IMR-90 (cell line): ENCODE measurements at regions of chr7 and their contacts with region 1.

Region 1: DNA sequence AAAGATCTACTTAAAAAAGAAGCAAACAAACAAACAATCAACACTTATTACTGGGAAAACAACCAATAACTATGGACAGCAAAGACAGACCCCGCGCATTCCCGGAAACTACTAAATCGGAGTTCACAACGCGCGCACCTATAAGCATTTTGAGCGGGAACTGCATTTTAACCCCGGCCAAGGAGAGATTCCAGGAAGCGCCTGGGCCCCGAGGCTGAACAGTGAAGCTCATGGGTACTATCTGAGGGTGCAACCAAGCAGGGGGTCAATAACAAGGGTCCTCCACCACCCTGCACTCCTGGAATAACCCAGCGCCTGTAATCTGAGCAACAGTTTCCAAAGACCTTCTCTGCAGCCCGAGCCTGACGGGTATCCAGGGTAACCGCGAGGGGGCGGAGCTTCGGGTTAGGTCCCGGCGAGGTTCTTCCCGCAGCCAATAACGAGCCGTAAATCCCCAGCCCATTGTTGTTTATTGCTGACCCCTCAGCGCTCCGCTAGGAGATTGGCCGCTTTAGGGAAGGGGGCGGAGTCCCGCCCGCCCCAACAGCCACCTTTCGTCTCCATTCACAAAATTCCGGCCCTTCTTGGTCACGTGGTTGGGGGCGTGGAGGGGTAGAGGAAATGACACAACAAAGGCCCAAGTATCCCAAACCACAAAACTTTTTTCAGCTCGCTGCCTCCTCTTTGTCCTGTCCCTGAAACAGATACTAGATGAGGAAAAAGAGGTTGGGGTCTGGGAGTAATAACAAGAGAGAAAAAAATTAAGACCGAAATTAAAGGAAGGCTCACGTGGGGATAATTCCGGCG is 1.7 kb upstream of the ETV1 start:
- DNase-seq: peak; percentile 98
- ATAC-seq: peak; percentile 93
- H3K4me3 ChIP-seq: peak overlapping the region; percentile 91
- H3K27ac ChIP-seq: peak overlapping the region; percentile 70
- H3K4me1 ChIP-seq: no peaks in the 10 kb centered on the region
- H3K27me3 ChIP-seq: no peaks in the 10 kb centered on the region
- CTCF ChIP-seq: no peak
- POLR2A ChIP-seq: peak; percentile 71; the same call in 1 of the 2 replicates
- RAD21 ChIP-seq: no peak; the same call in 1 of the 2 replicates

Region 2: DNA sequence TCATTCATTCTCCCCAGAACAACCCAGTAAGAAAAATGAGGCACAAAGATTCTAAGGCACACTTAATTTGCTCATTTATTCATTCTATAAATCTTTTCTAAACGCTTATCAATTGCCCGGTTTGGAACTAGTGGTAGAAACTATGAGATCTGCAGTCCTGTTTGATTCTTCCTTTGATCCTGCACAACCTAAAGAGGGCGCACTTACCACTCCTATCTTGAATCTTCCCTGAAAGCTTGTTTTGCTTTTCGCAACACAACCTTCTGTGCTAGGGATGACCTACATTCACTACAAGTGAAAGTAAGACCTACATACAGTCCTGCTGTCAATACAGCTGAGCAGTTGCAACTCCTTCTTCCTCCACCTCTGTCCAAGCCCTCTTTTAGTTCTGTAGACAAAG is 1316.3 kb before region 1 on chr7:
- CTCF ChIA-PET with region 1: no interaction called
- POLR2A ChIA-PET with region 1: no interaction called
- dilution Hi-C with region 1: no loop called
- in situ Hi-C with region 1: loop called (anchors 25 kb)
- intact Hi-C with region 1: no loop called
- DNase-seq: peak; percentile 61
- ATAC-seq: peak; percentile 66
- H3K4me3 ChIP-seq: no peak overlapping the region
- H3K27ac ChIP-seq: no peak overlapping the region
- H3K4me1 ChIP-seq: peaks cover 4% of the 10 kb centered on the region
- H3K27me3 ChIP-seq: no peaks in the 10 kb centered on the region
- CTCF ChIP-seq: peak; percentile 54
- POLR2A ChIP-seq: no peak
- RAD21 ChIP-seq: peak; percentile 47

Region 3: GRCh38 chr7:13524076-13524475 is 467.1 kb before region 1 on chr7:
- CTCF ChIA-PET with region 1: interaction called, 3 read pairs
- POLR2A ChIA-PET with region 1: no interaction called
- dilution Hi-C with region 1: no loop called
- in situ Hi-C with region 1: no loop called
- intact Hi-C with region 1: loop called (anchors 1 kb)
- DNase-seq: no peak
- ATAC-seq: no peak
- H3K4me3 ChIP-seq: no peak overlapping the region
- H3K27ac ChIP-seq: no peak overlapping the region
- H3K4me1 ChIP-seq: no peaks in the 10 kb centered on the region
- H3K27me3 ChIP-seq: no peaks in the 10 kb centered on the region
- CTCF ChIP-seq: no peak
- POLR2A ChIP-seq: no peak
- RAD21 ChIP-seq: no peak

Region 4: DNA sequence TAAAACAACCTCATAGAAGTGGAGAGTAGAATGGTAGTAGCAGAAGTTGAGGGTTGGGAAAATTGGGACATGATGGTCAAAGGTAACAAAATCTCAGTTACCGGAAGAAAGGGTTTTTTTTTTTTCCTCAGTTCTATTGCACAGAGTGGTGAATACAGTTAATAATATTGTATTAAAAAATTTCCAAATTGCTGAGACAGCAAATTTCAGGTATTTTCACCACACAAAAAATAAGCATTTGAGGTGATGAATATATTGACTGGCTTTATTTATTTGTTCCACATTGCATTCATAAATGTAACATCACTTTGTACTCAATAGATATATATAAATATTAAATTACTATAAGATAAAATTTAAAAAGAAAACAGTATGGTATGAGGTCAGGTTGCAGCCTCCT is 375.5 kb before region 1 on chr7:
- CTCF ChIA-PET with region 1: no interaction called
- POLR2A ChIA-PET with region 1: interaction called, 17 read pairs
- dilution Hi-C with region 1: no loop called
- in situ Hi-C with region 1: no loop called
- intact Hi-C with region 1: no loop called
- DNase-seq: no peak
- ATAC-seq: no peak
- H3K4me3 ChIP-seq: no peak overlapping the region
- H3K27ac ChIP-seq: no peak overlapping the region
- H3K4me1 ChIP-seq: no peaks in the 10 kb centered on the region
- H3K27me3 ChIP-seq: no peaks in the 10 kb centered on the region
- CTCF ChIP-seq: no peak
- POLR2A ChIP-seq: no peak
- RAD21 ChIP-seq: no peak

Region 5: GRCh38 chr7:13850185-13850752 is 140.9 kb before region 1 on chr7:
- CTCF ChIA-PET with region 1: interaction called, 4 read pairs
- POLR2A ChIA-PET with region 1: interaction called, 3 read pairs
- dilution Hi-C with region 1: no loop called
- in situ Hi-C with region 1: no loop called
- intact Hi-C with region 1: loop called (anchors 2 kb)
- DNase-seq: peak; percentile 99
- ATAC-seq: peak; percentile 87
- H3K4me3 ChIP-seq: no peak overlapping the region
- H3K27ac ChIP-seq: peak overlapping the region; percentile 91
- H3K4me1 ChIP-seq: peaks cover 10% of the 10 kb centered on the region
- H3K27me3 ChIP-seq: no peaks in the 10 kb centered on the region
- CTCF ChIP-seq: no peak
- POLR2A ChIP-seq: no peak
- RAD21 ChIP-seq: peak; percentile 30; the same call in 1 of the 2 replicates

Region 6: GRCh38 chr7:13945670-13946069 is 45.5 kb before region 1 on chr7:
- CTCF ChIA-PET with region 1: no interaction called
- POLR2A ChIA-PET with region 1: no interaction called
- dilution Hi-C with region 1: no loop called
- in situ Hi-C with region 1: no loop called
- intact Hi-C with region 1: loop called (anchors 2 kb)
- DNase-seq: no peak
- ATAC-seq: no peak; the same call in 1 of the 2 replicates
- H3K4me3 ChIP-seq: no peak overlapping the region
- H3K27ac ChIP-seq: no peak overlapping the region
- H3K4me1 ChIP-seq: peaks cover 2% of the 10 kb centered on the region; the same call in 1 of the 2 replicates
- H3K27me3 ChIP-seq: no peaks in the 10 kb centered on the region
- CTCF ChIP-seq: no peak
- POLR2A ChIP-seq: no peak
- RAD21 ChIP-seq: no peak

Region 7: GRCh38 chr7:14137676-14138075 is 146.5 kb after region 1 on chr7:
- CTCF ChIA-PET with region 1: no interaction called
- POLR2A ChIA-PET with region 1: no interaction called
- dilution Hi-C with region 1: no loop called
- in situ Hi-C with region 1: no loop called
- intact Hi-C with region 1: no loop called
- DNase-seq: no peak
- ATAC-seq: no peak
- H3K4me3 ChIP-seq: no peak overlapping the region
- H3K27ac ChIP-seq: no peak overlapping the region
- H3K4me1 ChIP-seq: no peaks in the 10 kb centered on the region
- H3K27me3 ChIP-seq: no peaks in the 10 kb centered on the region
- CTCF ChIP-seq: no peak
- POLR2A ChIP-seq: no peak
- RAD21 ChIP-seq: no peak

Region 8: GRCh38 chr7:14275356-14275755 is 284.2 kb after region 1 on chr7:
- CTCF ChIA-PET with region 1: no interaction called
- POLR2A ChIA-PET with region 1: no interaction called
- dilution Hi-C with region 1: no loop called
- in situ Hi-C with region 1: no loop called
- intact Hi-C with region 1: no loop called
- DNase-seq: no peak
- ATAC-seq: no peak
- H3K4me3 ChIP-seq: no peak overlapping the region
- H3K27ac ChIP-seq: no peak overlapping the region
- H3K4me1 ChIP-seq: no peaks in the 10 kb centered on the region
- H3K27me3 ChIP-seq: no peaks in the 10 kb centered on the region
- CTCF ChIP-seq: no peak
- POLR2A ChIP-seq: no peak
- RAD21 ChIP-seq: no peak

Region 9: DNA sequence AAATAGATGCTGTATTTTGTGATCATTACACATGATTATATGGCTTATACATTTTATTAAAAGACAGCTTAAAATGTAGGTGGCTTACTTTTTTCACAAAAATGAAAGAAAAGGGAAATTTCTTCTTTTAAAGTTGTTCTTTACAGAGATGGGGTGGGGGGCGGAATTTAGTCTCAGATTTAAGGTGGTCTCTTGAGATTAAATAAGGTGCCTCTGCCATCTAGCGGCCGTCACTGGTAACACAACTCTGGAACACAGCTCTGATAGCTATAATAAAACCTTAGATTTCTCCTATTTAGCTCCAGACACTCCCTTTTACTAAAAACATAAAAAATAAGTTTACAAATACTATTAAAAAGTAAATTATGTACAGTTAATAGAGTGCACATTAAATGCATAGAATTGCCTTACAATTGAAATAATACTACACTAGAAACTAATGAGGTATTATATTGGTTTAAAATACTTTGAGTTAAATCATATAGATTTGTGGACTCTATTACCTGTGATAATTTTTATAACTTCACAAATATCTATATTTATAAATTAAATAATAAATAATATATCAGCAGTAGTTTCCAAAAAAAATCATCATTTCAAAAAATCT is 700.5 kb after region 1 on chr7:
- CTCF ChIA-PET with region 1: no interaction called
- POLR2A ChIA-PET with region 1: no interaction called
- dilution Hi-C with region 1: no loop called
- in situ Hi-C with region 1: no loop called
- intact Hi-C with region 1: loop called (anchors 2 kb)
- DNase-seq: peak; percentile 30
- ATAC-seq: peak; percentile 53; the same call in 1 of the 2 replicates
- H3K4me3 ChIP-seq: no peak overlapping the region
- H3K27ac ChIP-seq: no peak overlapping the region
- H3K4me1 ChIP-seq: no peaks in the 10 kb centered on the region
- H3K27me3 ChIP-seq: no peaks in the 10 kb centered on the region
- CTCF ChIP-seq: peak; percentile 75
- POLR2A ChIP-seq: no peak
- RAD21 ChIP-seq: peak; percentile 66